ENCODE measurements at regions of chr18 and their contacts with region 1.

Region 1: GRCh38 chr18:54805571-54806334 is 22.5 kb upstream of the RAB27B start:
- DNase-seq: no peak
- H3K4me3 Mint-ChIP-seq: no peak overlapping the region
- H3K27ac Mint-ChIP-seq: peak overlapping the region; percentile 64
- H3K4me1 Mint-ChIP-seq: peaks cover 22% of the 10 kb centered on the region
- H3K27me3 Mint-ChIP-seq: peaks cover 22% of the 10 kb centered on the region

Region 2: DNA sequence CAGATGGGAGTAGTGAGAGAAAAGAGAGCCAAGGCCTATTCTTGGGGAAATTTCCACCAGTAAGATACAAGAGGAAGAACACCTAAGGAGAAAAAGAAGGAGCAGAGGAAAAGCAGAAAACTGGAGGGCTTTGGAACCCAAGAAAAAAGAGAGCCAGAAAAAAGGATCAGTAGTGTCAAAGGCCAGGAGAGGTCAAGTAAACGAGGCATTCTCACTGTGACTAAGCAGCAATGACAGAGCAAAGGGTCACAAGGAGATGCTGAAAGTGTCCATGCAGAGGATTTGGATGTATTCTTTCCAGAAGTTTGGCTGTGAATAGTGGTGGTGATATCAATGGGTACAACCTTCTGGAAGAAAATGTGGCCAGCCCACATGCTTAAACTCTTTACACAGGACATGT is 105.2 kb before region 1 on chr18:
- intact Hi-C with region 1: no loop called
- DNase-seq: no peak
- H3K4me3 Mint-ChIP-seq: no peak overlapping the region
- H3K27ac Mint-ChIP-seq: no peak overlapping the region
- H3K4me1 Mint-ChIP-seq: no peaks in the 10 kb centered on the region
- H3K27me3 Mint-ChIP-seq: peaks cover 24% of the 10 kb centered on the region

Region 3: GRCh38 chr18:54712306-54712705 is 93.4 kb before region 1 on chr18:
- intact Hi-C with region 1: loop called (anchors 1 kb)
- DNase-seq: no peak
- H3K4me3 Mint-ChIP-seq: no peak overlapping the region
- H3K27ac Mint-ChIP-seq: no peak overlapping the region
- H3K4me1 Mint-ChIP-seq: peaks cover 48% of the 10 kb centered on the region
- H3K27me3 Mint-ChIP-seq: peaks cover 43% of the 10 kb centered on the region

Region 4: DNA sequence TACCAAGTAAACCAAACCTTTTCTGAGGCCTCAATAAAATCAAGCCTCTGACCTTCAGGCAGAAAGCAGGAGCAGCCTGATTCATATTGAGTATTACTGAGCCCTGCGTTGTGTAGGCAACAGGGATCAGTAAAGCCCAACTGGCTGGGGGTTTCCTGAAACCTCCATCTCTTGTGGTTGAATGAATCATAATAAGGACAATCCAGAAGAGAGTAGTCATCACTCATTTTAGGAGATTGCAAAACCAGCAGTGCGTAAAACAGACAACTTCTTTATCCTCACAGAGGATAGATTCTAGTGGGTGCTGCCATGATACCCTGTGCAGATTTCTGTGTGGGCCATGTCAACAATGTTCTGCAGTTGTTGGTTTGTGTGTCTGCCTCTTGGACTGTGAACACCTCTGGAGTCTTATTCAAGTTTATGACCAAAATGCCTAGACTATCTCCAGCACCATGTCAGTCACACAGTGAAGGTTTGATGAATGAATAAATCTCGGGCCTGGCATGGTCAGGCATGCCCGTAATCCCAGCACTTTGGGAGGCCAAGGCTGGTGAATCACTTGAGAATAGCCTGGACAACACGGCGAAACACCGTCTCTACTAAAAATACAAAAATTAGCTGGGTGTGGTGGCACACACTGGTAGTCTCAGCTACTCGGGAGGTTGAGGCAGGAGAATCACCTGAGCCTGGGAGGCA is 29.3 kb before region 1 on chr18:
- intact Hi-C with region 1: loop called (anchors 1 kb)
- DNase-seq: no peak
- H3K4me3 Mint-ChIP-seq: no peak overlapping the region
- H3K27ac Mint-ChIP-seq: peak overlapping the region; percentile 77
- H3K4me1 Mint-ChIP-seq: peaks cover 29% of the 10 kb centered on the region
- H3K27me3 Mint-ChIP-seq: peaks cover 10% of the 10 kb centered on the region

Region 5: DNA sequence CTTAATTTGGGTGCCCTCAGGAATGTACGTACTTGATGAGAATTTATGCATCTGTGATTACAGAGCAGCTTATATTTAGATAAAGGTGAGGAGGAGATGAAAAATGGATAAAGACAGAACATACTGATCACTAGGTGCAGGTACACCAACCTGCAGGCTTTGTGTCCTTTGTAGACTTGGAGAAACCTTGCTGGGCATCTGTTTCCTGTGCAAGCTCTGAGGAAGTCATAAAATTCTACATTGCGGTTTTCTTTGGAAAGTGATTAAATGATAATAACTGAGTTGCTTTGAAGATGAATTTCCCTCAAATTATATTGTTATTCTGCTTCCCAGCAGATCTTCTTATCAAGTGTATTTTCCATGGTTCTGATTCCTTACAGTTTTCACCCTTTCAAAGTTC is 30.2 kb after region 1 on chr18:
- intact Hi-C with region 1: loop called (anchors 2 kb)
- DNase-seq: no peak
- H3K4me3 Mint-ChIP-seq: peak overlapping the region; percentile 49
- H3K27ac Mint-ChIP-seq: peak overlapping the region; percentile 74
- H3K4me1 Mint-ChIP-seq: peaks cover 26% of the 10 kb centered on the region
- H3K27me3 Mint-ChIP-seq: peaks cover 4% of the 10 kb centered on the region

Region 6: DNA sequence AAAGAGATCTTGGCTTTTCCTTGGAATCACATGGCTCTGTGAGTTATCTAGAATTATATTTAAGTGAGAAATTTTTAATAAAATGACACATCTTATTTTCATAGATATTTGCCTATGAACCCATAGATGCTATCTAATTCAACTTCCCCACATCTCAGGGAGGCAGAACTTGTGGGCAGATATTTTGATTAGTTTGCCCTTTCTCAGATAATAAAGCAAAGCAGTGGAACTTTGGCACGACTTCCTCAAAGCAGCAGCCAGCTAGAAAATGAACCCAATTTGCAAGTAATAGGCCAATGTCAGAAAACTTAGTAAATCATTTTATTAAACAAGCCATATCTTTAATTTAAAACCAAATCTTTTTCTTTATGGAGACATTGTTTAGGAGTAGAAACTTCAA is 55.2 kb after region 1 on chr18:
- intact Hi-C with region 1: no loop called
- DNase-seq: no peak
- H3K4me3 Mint-ChIP-seq: no peak overlapping the region
- H3K27ac Mint-ChIP-seq: no peak overlapping the region
- H3K4me1 Mint-ChIP-seq: peaks cover 2% of the 10 kb centered on the region
- H3K27me3 Mint-ChIP-seq: peaks cover 9% of the 10 kb centered on the region

Region 7: DNA sequence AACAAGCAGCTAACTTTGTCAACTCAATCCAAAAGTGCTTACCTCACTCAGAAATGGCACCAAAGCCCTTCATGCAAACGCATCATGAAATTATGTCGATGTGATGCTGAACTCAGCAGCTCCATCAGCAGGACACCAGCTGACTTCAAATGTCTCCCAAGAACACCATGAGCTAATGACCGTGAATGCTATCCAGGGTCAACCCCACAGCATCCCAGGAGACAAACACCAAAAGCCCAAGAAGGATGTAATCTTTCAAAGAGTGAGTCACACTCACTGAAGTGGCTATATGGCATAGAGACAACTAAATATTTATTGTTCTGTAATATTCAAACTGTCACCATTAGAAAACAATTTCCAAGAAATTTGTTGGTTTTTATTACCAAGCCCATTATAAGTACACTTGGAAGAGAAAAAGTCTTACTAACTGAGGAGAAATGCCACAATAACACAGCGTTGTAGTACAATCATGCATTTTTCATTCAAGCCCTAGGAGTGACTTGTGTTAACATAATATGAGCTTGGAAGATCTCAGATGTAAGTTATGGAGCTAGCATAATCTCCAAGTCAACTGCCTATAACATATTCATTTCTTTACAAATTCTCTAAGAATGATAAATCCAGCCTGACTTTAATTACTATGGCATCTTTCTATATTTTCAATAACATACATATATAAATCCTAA is 318.5 kb after region 1 on chr18:
- intact Hi-C with region 1: no loop called
- DNase-seq: no peak
- H3K4me3 Mint-ChIP-seq: no peak overlapping the region
- H3K27ac Mint-ChIP-seq: no peak overlapping the region
- H3K4me1 Mint-ChIP-seq: no peaks in the 10 kb centered on the region
- H3K27me3 Mint-ChIP-seq: no peaks in the 10 kb centered on the region

Region 8: GRCh38 chr18:55251254-55251971 is 445.7 kb after region 1 on chr18:
- intact Hi-C with region 1: loop called (anchors 5 kb)
- DNase-seq: no peak
- H3K4me3 Mint-ChIP-seq: no peak overlapping the region
- H3K27ac Mint-ChIP-seq: no peak overlapping the region
- H3K4me1 Mint-ChIP-seq: peaks cover 45% of the 10 kb centered on the region
- H3K27me3 Mint-ChIP-seq: no peaks in the 10 kb centered on the region

Measured in activated T-helper 2 cell treated with anti-CD3 and anti-CD28 coated beads, Interferon-gamma antibody, Interleukin-2, Interleukin-4, amounts not matched to agents 10 μg/mL and 5 μg/mL and 100 μg/mL, durations not matched to agents 14 hours and 24 hours and 36 hours (primary cell).